KBM-7 (cell line): ENCODE measurements at regions of chr21 and their contacts with region 1.

Region 1: DNA sequence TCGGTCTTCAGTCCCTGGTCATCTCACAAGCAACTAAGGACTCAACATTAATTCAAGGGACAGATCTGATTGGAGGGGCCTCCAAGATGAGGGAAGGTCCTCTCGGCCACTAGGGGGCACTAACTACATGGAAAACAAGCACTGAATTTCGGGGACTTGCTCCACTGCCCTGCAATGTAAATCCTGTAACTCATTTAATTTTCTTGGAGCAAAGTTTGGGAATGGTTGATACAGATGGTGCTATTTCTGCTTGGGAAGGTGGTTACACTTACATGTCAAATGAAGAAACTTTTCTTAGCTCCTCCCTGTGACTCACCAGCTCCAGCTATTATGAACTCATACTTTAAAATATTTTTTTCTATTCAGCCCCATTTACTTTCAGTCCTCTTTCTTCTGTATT is 97.4 kb upstream of the KCNJ15 start:
- DNase-seq: peak; percentile 80

Region 2: DNA sequence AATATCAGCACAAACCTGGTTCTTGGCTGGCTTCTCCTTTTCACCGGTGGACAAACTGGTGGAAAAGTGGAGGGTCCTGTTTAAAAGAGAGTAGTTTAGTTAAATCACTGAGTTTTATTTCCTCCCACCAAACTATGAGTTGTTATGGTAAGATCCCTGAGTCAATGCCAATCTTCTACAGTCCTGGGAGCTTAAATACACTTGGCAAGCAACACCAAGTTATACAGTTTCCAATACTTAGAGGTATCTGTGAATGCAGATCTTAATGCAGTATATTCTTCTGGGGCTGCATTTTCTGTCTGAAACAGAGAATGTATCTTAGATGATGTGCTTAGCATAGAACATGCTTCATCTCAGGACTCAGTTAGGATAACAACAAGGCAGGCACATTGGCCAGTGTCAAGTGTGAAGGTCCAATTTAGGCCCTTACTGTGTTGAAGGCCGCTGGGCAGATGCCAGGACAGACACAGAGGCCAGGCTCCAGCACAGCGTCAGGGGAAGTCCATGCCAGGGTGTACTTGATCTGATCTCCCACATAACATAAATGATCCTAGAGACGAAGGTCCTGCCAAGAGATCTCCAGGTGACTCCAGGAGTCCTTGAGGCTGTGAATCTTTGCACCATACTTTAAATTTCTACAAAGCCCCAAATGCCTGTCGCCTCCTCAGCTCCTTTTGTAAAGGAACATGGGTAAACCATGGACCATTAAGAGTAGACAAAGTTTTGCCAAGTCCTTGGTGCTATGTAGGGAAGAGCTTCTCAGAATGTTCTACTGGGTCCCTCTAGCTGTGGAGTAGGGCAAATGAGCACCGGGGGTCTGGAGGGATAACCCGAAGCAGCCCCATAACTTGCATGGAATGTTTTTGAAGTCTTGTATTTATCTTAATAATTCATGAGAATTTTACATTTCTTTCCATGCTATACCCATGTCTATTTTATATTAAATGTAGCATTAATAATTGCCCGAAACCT is 174.2 kb after region 1 on chr21:
- in situ Hi-C with region 1: loop called (anchors 25 kb)
- DNase-seq: no peak

Region 3: DNA sequence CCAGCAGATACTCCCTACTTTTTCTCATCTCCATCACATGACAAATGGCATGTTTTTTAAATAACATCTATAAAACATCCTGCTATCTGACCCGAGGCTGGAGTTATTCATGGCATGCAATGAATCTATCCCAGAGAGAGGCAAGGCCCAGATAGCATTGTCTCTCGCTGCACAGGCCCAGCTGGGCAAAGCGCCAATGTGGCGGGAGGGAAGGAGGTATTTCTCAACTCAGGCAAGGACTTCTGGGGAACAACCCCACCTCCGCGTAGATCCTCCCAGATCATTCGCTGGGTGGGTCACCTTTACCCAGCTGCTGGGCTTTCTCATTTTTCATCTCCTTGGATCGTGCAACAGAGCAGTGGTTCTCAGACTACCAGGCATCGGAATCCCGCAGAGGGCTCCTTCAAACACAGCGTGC is 279.1 kb after region 1 on chr21:
- in situ Hi-C with region 1: no loop called
- DNase-seq: peak; percentile 30